ENCODE measurements at regions of chr7 and their contacts with region 1.

Region 1: DNA sequence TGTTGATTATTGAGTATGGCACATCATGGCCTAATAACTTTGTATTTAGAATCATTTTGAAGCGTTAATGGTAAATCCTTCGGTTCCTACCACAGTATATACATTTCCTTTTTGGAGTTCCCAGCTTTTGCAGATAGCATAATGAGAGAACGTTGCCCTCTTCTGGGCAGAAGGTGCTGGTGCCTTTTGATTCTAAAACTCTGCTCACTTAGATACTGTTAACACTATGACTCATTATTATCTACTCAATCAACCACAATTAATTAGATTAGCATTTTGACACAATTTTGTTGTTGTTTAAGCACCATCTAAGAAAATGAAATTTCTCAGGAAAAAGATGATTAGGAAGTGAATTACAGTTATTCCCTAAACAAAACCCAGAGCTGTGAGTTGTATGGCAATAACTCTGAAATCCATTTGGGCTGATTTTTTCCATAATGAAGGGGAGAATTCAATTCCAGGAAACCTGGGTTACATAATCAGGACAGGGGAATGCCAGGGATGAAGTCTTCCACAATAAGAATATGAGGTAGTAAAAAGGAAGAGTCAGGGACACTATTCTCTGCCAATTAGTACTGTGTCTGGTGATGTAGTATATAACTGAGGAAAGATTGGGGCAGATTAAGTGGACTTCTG is 11.5 kb upstream of the DLD start:
- DNase-seq: peak; percentile 71
- H3K4me3 Mint-ChIP-seq: no peak overlapping the region
- H3K27ac Mint-ChIP-seq: no peak overlapping the region
- H3K4me1 Mint-ChIP-seq: no peaks in the 10 kb centered on the region
- H3K27me3 Mint-ChIP-seq: peaks cover 33% of the 10 kb centered on the region
- CTCF ChIP-seq: peak; percentile 54

Region 2: DNA sequence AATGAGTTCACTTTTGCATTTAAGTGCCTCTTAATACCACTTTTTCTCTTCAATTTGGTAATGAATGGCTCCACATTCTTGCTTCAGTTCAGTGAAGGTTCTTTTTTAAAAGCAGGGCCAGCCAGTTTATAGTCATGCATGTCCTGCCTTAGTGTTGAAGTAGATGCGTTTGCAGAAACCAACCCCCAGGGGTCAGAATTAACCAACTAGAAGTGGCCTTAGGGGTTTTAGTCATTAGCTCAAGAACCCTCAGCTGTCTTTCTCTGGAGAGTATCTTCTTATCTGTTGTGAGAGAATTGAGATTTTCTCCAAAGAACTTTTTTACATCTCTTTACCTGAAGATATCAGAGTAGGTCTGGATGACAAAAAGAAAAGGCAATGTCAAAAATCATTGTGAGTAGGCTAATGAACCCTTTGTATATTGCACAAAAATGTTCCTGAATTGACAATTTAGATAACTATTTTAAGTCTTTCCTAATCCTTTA is 932.2 kb before region 1 on chr7:
- CTCF ChIA-PET with region 1: no interaction called
- POLR2A ChIA-PET with region 1: no interaction called
- intact Hi-C with region 1: loop called (anchors 2 kb)
- DNase-seq: peak; percentile 79
- H3K4me3 Mint-ChIP-seq: no peak overlapping the region
- H3K27ac Mint-ChIP-seq: no peak overlapping the region
- H3K4me1 Mint-ChIP-seq: no peaks in the 10 kb centered on the region
- H3K27me3 Mint-ChIP-seq: peaks cover 68% of the 10 kb centered on the region
- CTCF ChIP-seq: peak; percentile 52

Region 3: DNA sequence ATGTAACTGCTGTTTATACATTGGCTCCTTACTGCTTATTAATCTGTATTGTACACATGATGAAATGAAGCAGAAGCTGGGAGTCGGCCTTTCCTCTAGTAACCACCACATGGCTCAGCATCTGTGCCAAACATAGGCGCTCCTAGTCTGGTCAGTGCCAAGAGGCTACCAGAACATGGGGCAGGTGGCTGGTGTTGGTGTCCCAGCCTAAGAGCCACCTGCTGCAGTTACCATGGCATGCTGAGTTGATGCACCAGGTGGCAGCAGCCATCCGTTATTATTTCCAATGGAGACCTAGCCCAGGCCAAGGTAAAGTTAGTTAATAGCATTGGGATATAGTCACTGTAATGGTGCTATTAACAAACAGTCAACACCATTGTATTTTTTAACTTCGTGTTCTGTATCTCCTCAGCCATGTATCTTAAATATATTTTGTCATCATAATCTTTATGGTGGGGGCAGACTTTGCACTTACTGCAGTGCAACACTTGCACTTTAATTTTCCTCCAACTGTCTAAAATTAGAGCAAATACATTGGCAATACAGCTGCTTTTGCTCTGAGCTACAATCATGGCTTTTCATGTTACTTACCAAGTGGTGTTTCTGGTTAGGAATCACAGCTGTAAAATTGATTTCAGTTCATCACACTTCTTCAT is 677.6 kb before region 1 on chr7:
- CTCF ChIA-PET with region 1: interaction called, 3 read pairs
- POLR2A ChIA-PET with region 1: no interaction called
- intact Hi-C with region 1: loop called (anchors 1 kb)
- DNase-seq: peak; percentile 50
- H3K4me3 Mint-ChIP-seq: no peak overlapping the region
- H3K27ac Mint-ChIP-seq: no peak overlapping the region
- H3K4me1 Mint-ChIP-seq: no peaks in the 10 kb centered on the region
- H3K27me3 Mint-ChIP-seq: no peaks in the 10 kb centered on the region
- CTCF ChIP-seq: peak; percentile 55

Region 4: GRCh38 chr7:107725151-107725740 is 154.3 kb before region 1 on chr7:
- CTCF ChIA-PET with region 1: interaction called, 13 read pairs
- POLR2A ChIA-PET with region 1: no interaction called
- intact Hi-C with region 1: loop called (anchors 1 kb)
- DNase-seq: peak; percentile 78
- H3K4me3 Mint-ChIP-seq: no peak overlapping the region
- H3K27ac Mint-ChIP-seq: no peak overlapping the region
- H3K4me1 Mint-ChIP-seq: no peaks in the 10 kb centered on the region
- H3K27me3 Mint-ChIP-seq: peaks cover 23% of the 10 kb centered on the region
- CTCF ChIP-seq: peak; percentile 60

Region 5: GRCh38 chr7:107865956-107866775 is 13.4 kb before region 1 on chr7:
- CTCF ChIA-PET with region 1: interaction called, 13 read pairs
- POLR2A ChIA-PET with region 1: interaction called, 3 read pairs
- intact Hi-C with region 1: no loop called
- DNase-seq: no peak
- H3K4me3 Mint-ChIP-seq: no peak overlapping the region
- H3K27ac Mint-ChIP-seq: peak overlapping the region; percentile 10
- H3K4me1 Mint-ChIP-seq: peaks cover 5% of the 10 kb centered on the region
- H3K27me3 Mint-ChIP-seq: peaks cover 23% of the 10 kb centered on the region
- CTCF ChIP-seq: no peak

Region 6: DNA sequence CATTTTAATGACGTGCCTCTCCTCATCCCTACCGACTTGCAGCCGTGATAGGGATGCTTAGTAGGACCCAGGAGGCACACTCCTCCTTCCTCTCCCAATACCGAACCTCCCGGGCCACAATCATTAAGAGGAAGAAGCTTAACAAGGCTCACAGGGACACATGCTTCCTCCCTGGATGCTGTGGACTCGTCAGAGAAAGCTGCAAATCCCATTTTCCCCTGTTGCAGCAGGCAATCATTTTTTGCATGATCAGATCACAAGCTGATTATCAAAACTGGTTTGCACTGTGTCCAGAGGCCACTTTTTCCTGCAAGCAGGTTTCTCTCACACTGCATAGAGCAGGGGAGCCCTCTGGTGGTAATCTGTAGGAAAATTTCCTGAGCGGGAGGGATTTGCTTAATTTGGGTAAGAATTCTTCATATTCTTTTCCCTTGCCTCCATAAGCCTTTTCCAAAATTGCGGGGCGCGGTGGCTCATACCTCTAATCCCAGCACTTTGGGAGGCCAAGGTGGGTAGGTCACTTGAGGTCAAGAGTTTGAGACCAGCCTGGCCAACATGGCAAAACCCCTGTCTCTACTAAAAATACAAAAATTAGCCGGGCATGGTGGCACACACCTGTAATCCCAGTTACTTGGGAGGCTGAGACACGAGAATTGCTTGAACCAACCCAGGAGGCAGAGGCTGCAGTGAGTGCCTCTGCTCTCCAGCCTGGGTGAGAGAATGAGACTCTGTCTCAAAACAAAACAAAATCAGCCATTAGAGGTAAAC is 266.7 kb after region 1 on chr7:
- CTCF ChIA-PET with region 1: interaction called, 22 read pairs
- POLR2A ChIA-PET with region 1: no interaction called
- intact Hi-C with region 1: loop called (anchors 1 kb)
- DNase-seq: peak; percentile 84
- H3K4me3 Mint-ChIP-seq: no peak overlapping the region
- H3K27ac Mint-ChIP-seq: no peak overlapping the region
- H3K4me1 Mint-ChIP-seq: no peaks in the 10 kb centered on the region
- H3K27me3 Mint-ChIP-seq: no peaks in the 10 kb centered on the region
- CTCF ChIP-seq: peak; percentile 96

Region 7: GRCh38 chr7:108280136-108280535 is 400.6 kb after region 1 on chr7:
- CTCF ChIA-PET with region 1: no interaction called
- POLR2A ChIA-PET with region 1: no interaction called
- intact Hi-C with region 1: no loop called
- DNase-seq: no peak
- H3K4me3 Mint-ChIP-seq: no peak overlapping the region
- H3K27ac Mint-ChIP-seq: no peak overlapping the region
- H3K4me1 Mint-ChIP-seq: peaks cover 10% of the 10 kb centered on the region
- H3K27me3 Mint-ChIP-seq: no peaks in the 10 kb centered on the region
- CTCF ChIP-seq: no peak